ENCODE measurements at regions of chr3 and their contacts with region 1.

Region 1: DNA sequence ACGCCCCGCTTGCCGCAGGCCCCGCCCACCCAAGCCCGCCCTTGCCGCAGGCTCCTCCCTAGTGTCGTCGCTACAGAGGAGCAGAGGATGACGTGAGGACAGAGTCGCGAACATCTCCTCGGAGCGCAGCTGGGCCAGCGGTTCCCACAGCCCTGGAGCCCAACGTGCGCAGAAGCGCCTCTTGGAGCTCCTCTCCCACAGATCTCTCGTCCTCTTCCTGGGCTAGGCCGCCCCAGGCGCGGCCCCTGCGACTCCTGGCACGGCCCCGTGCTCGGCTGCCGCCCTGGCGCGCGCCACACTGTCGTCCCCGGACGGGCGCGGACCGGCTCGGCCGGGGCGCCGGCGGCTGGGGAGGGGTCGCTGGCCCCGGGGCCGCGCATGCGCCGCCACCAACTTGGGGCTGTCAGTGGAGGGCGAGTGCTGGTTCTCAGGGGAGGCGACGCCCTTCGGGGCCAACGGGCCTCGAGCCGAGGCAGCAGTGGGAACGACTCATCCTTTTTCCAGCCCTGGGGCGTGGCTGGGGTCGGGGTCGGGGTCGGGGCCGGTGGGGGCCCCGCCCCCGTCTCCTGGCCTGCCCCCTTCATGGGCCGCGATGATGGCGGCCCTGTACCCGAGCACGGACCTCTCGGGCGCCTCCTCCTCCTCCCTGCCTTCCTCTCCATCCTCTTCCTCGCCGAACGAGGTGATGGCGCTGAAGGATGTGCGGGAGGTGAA is at the start of gene TRPC1:
- DNase-seq: no peak
- ATAC-seq: peak; percentile 97
- H3K4me3 ChIP-seq: peak within 1 kb of the TSS; percentile 70
- H3K27ac ChIP-seq: no peak within 1 kb of the TSS
- H3K4me1 ChIP-seq: no peaks in the 10 kb centered on the region
- H3K27me3 ChIP-seq: no peaks in the 10 kb centered on the region
- CTCF ChIP-seq: no peak
- EP300 ChIP-seq: no peak
- POLR2A ChIP-seq: peak; percentile 79
- RAD21 ChIP-seq: no peak
- polyA plus RNA-seq, gene TRPC1: 0.05 TPM

Region 2: DNA sequence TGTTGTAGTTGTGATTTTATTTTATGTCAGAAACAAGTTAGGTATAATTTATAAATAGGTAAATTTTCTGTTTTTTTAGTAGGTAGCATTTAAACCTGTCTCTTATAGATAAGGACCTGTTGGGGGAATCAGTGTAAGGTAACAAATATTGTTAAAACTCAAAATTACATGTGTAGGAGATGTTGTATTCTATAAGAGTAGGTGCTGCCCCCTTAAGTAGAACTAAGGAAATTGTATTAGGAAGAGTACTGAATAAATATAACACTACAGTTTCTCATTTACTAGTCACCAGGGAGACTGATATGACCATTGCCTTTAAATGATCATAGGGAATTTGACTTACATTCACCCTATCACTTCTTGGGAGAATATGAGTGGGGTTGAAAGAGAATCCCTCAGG is 1751.3 kb before region 1 on chr3:
- CTCF ChIA-PET with region 1: no interaction called
- POLR2A ChIA-PET with region 1: no interaction called
- RAD21 ChIA-PET with region 1: no interaction called
- SMC1A ChIA-PET with region 1: no interaction called
- in situ Hi-C with region 1: no loop called
- intact Hi-C with region 1: loop called (anchors 5 kb)
- DNase-seq: no peak
- ATAC-seq: peak; percentile 74
- H3K4me3 ChIP-seq: no peak overlapping the region
- H3K27ac ChIP-seq: no peak overlapping the region
- H3K4me1 ChIP-seq: no peaks in the 10 kb centered on the region
- H3K27me3 ChIP-seq: no peaks in the 10 kb centered on the region
- CTCF ChIP-seq: peak; percentile 22 to 44 (median 23); a peak in 2 of 6 replicates
- EP300 ChIP-seq: no peak
- POLR2A ChIP-seq: no peak
- RAD21 ChIP-seq: no peak

Region 3: DNA sequence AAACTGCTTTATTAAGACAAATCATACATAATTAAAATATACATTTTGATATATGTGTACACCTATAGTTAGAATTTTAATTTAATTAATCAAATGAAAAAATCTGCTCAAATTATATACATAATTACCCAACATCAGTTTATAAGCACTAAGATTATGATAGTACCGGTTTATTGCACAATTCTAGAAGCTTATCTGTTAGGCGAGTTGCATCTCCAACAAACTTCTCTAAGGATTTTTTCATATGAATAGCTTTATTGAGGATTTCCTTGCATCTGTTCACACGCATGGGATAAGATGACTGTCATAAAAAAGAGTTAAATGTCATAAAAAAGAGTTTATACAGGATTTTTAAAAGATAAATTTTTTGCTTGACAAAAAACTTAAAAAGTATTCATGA is 256.4 kb before region 1 on chr3:
- CTCF ChIA-PET with region 1: no interaction called
- POLR2A ChIA-PET with region 1: no interaction called
- RAD21 ChIA-PET with region 1: no interaction called
- SMC1A ChIA-PET with region 1: no interaction called
- in situ Hi-C with region 1: no loop called
- intact Hi-C with region 1: no loop called
- DNase-seq: no peak
- ATAC-seq: no peak
- H3K4me3 ChIP-seq: no peak overlapping the region
- H3K27ac ChIP-seq: no peak overlapping the region
- H3K4me1 ChIP-seq: no peaks in the 10 kb centered on the region
- H3K27me3 ChIP-seq: no peaks in the 10 kb centered on the region
- CTCF ChIP-seq: no peak
- EP300 ChIP-seq: no peak
- POLR2A ChIP-seq: no peak
- RAD21 ChIP-seq: no peak